Activated B cell treated with CpG ODN at 0.5 μM for 24 hours (primary cell): ENCODE measurements at regions of chrX and their contacts with region 1.

Region 1: GRCh38 chrX:46758906-46759644 is at the start of gene SLC9A7:
- DNase-seq: peak; percentile 81
- ATAC-seq: peak; percentile 68
- H3K4me3 Mint-ChIP-seq: peak within 1 kb of the TSS; percentile 96
- H3K27ac Mint-ChIP-seq: peak within 1 kb of the TSS; percentile 93
- H3K4me1 Mint-ChIP-seq: peaks cover 44% of the 10 kb centered on the region
- H3K27me3 Mint-ChIP-seq: no peaks in the 10 kb centered on the region
- CTCF ChIP-seq: no peak
- total RNA-seq, gene SLC9A7: 44.5 and 55.1 TPM in 2 replicates

Region 2: GRCh38 chrX:46554942-46555341 is 204.1 kb before region 1 on chrX:
- CTCF ChIA-PET with region 1: interaction called, 4 read pairs
- POLR2A ChIA-PET with region 1: interaction called, 3 read pairs
- intact Hi-C with region 1: loop called (anchors 1 kb)
- DNase-seq: no peak
- ATAC-seq: no peak
- H3K4me3 Mint-ChIP-seq: no peak overlapping the region
- H3K27ac Mint-ChIP-seq: no peak overlapping the region
- H3K4me1 Mint-ChIP-seq: no peaks in the 10 kb centered on the region
- H3K27me3 Mint-ChIP-seq: peaks cover 6% of the 10 kb centered on the region
- CTCF ChIP-seq: no peak

Region 3: DNA sequence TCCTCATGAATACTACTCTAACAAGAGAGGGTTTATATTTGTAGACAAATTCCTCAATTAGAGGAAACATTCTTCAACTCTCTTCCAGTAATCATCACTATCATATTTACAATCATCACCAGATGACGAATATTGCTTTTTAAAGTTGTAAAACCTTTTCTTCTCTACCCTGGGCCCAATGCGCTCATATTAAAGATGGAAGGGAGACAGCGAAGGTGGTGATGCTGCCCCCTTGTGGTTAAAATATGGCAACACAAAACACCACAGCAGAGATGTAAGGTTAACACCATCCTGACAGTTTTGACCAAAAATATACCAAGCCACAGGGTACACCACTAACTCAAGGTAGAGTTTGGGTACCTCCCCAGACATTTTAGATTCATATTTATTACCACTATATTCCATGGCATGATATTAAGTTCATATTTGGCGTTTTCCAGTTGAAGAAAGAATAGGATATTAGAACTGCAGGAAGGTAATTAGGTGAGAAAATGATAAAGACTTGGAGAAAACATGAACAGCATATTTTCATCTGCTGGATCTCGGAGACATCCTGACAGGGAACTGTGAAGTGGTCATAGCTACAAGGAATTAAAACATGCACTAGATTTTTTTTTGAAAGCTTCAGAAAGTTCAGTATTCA is 73.0 kb before region 1 on chrX:
- CTCF ChIA-PET with region 1: interaction called, 6 read pairs
- POLR2A ChIA-PET with region 1: no interaction called
- intact Hi-C with region 1: loop called (anchors 2 kb)
- DNase-seq: no peak
- ATAC-seq: peak; percentile 65
- H3K4me3 Mint-ChIP-seq: no peak overlapping the region
- H3K27ac Mint-ChIP-seq: no peak overlapping the region
- H3K4me1 Mint-ChIP-seq: peaks cover 57% of the 10 kb centered on the region
- H3K27me3 Mint-ChIP-seq: no peaks in the 10 kb centered on the region
- CTCF ChIP-seq: no peak

Region 4: GRCh38 chrX:46744009-46744408 is 15.1 kb before region 1 on chrX:
- CTCF ChIA-PET with region 1: no interaction called
- POLR2A ChIA-PET with region 1: no interaction called
- intact Hi-C with region 1: no loop called
- DNase-seq: no peak
- ATAC-seq: no peak
- H3K4me3 Mint-ChIP-seq: peak overlapping the region; percentile 58
- H3K27ac Mint-ChIP-seq: no peak overlapping the region
- H3K4me1 Mint-ChIP-seq: peaks cover 66% of the 10 kb centered on the region
- H3K27me3 Mint-ChIP-seq: no peaks in the 10 kb centered on the region
- CTCF ChIP-seq: no peak

Region 5: DNA sequence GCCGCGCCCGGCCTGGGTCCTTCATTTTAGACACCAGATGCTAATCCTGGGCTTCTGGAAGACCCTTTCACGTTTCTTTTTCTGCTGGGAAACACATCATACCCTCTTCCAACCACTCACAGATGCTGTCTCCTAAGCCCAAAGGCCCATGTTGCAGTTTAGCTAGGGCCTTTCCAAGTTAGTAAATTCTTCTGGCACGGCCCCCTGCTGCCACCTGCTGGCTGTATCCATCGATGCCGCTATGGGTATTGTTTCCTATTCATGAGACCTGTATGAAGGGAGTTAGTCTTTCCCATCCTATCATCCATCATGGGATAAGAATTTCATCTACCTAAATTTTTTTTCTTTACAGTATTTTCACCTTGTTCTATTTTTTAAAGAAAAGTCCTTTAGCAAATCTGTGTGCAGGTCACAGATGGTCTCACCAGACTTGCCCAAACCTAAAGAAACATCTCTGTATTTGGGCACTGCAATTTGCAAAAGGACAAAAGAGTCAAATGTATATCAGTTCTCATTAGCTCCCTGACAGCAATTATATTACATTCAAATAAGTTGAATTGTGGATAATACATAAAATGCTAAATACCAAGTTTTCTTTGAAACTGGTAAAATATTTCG is 37.6 kb after region 1 on chrX:
- CTCF ChIA-PET with region 1: interaction called, 14 read pairs
- POLR2A ChIA-PET with region 1: interaction called, 6 read pairs
- intact Hi-C with region 1: loop called (anchors 1 kb)
- DNase-seq: peak; percentile 61
- ATAC-seq: peak; percentile 80
- H3K4me3 Mint-ChIP-seq: no peak overlapping the region
- H3K27ac Mint-ChIP-seq: no peak overlapping the region
- H3K4me1 Mint-ChIP-seq: peaks cover 20% of the 10 kb centered on the region
- H3K27me3 Mint-ChIP-seq: no peaks in the 10 kb centered on the region
- CTCF ChIP-seq: no peak

Region 6: GRCh38 chrX:46978341-46979291 is 219.5 kb after region 1 on chrX:
- CTCF ChIA-PET with region 1: no interaction called
- POLR2A ChIA-PET with region 1: no interaction called
- intact Hi-C with region 1: loop called (anchors 2 kb)
- DNase-seq: peak; percentile 54
- ATAC-seq: peak; percentile 86
- H3K4me3 Mint-ChIP-seq: no peak overlapping the region
- H3K27ac Mint-ChIP-seq: peak overlapping the region; percentile 1
- H3K4me1 Mint-ChIP-seq: peaks cover 37% of the 10 kb centered on the region
- H3K27me3 Mint-ChIP-seq: no peaks in the 10 kb centered on the region
- CTCF ChIP-seq: no peak

Region 7: GRCh38 chrX:47523297-47523696 is 764.2 kb after region 1 on chrX:
- CTCF ChIA-PET with region 1: no interaction called
- POLR2A ChIA-PET with region 1: no interaction called
- intact Hi-C with region 1: loop called (anchors 5 kb)
- DNase-seq: peak; percentile 78
- ATAC-seq: peak; percentile 99
- H3K4me3 Mint-ChIP-seq: peak overlapping the region; percentile 73
- H3K27ac Mint-ChIP-seq: peak overlapping the region; percentile 46
- H3K4me1 Mint-ChIP-seq: peaks cover 3% of the 10 kb centered on the region
- H3K27me3 Mint-ChIP-seq: no peaks in the 10 kb centered on the region
- CTCF ChIP-seq: no peak